Colonic mucosa (tissue), 4 donors: ENCODE measurements at regions of chr17 and their contacts with region 1.

Region 1: GRCh38 chr17:75514919-75515495 is 330 bp downstream of the CASKIN2 start:
- DNase-seq: no peak
- H3K4me3 ChIP-seq: peak overlapping the region; percentile 94
- H3K27ac ChIP-seq: peak overlapping the region; percentile 42
- H3K4me1 ChIP-seq: peaks cover 23% of the 10 kb centered on the region
- H3K27me3 ChIP-seq: no peaks in the 10 kb centered on the region
- CTCF ChIP-seq: no peak

Region 2: GRCh38 chr17:75428543-75429469 is 86.2 kb before region 1 on chr17:
- intact Hi-C with region 1: loop called (anchors 5 kb)
- DNase-seq: no peak
- H3K4me3 ChIP-seq: no peak overlapping the region
- H3K27ac ChIP-seq: peak overlapping the region; percentile 41
- H3K4me1 ChIP-seq: no peaks in the 10 kb centered on the region
- H3K27me3 ChIP-seq: no peaks in the 10 kb centered on the region
- CTCF ChIP-seq: no peak